ENCODE measurements at regions of chr1 and their contacts with region 1.

Region 1: GRCh38 chr1:209435654-209436566 is 147.6 kb upstream of the CAMK1G start:
- DNase-seq: peak; percentile 73 to 93
- H3K4me3 ChIP-seq: no peak overlapping the region
- CTCF ChIP-seq: no peak
- POLR2A ChIP-seq: no peak

Region 2: DNA sequence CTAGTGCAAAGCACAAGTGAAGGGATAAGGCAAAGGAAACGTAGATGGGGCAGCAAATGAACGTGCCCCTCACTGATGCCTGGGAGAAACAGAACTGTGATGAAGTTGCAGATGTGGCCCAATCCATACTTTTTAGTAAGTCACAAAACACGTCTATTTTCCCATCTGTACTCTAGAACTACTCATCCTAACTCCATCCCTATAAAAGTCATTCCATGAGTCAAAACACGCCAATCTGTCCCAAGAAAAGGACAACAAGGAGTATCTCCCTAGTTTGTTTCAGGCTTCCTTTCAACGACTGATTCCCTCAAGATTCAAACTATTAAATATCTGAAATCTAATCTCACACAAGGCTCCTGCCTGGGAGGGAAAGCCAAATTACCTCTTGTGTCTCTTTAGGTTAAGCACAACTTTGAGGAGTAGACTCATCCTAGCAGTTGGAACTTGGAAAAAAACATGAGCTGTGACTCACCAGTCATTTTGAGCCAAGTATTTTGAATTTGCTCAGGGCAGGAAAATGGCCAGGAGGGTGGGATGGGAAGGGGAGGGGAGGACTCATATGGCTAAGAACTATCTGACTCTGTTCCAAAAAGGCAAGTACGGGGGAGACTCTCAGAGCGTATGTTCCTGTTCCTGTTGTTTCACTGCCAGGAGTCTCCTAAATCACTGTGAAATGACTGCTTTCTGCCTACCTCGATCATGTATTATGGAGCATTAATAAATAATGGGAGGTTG is 66.9 kb before region 1 on chr1:
- intact Hi-C with region 1: loop called (anchors 10 kb)
- DNase-seq: peak in 1 of 2 donors; percentile 39
- H3K4me3 ChIP-seq: no peak overlapping the region
- CTCF ChIP-seq: no peak
- POLR2A ChIP-seq: no peak

Region 3: GRCh38 chr1:209380420-209380819 is 55.5 kb before region 1 on chr1:
- intact Hi-C with region 1: no loop called
- DNase-seq: no peak
- H3K4me3 ChIP-seq: no peak overlapping the region
- CTCF ChIP-seq: no peak
- POLR2A ChIP-seq: no peak

Measured in lower leg skin (tissue), 4 donors.